Mammary epithelial cell (primary cell): ENCODE measurements at regions of chr4 and their contacts with region 1.

Region 1: DNA sequence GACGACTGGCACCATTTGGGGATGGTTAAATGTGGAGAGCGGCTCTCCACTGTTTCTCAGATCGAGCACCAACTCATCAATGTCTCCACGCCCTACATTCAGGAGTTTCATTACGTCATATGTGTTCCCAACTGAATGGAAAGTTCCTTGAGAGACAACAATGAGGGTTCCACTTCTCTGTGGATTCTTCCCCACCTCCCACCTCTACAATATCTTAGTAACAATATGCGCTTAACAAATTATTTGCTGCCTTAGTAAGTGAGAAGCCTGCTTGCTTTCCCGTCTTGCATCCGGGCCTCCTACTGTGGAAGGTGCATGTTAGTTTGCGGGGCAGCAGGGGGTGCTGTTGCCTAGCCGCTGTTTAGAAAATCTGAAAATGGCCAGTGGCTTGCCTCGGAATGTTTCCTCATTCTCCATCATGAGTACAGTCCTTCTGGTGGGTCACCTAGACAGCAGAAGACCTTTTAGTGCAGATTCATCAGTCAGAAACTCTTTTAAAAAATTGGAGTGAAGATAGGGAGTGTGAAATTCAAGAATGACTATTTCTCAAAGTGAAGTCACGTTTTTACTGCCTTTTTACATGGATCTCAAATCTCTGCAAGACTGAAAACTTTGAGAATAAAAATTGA is 55.7 kb downstream of the PHOX2B start:
- DNase-seq: peak; percentile 40
- H3K4me3 ChIP-seq: no peak overlapping the region
- H3K27ac ChIP-seq: no peak overlapping the region
- H3K4me1 ChIP-seq: no peaks in the 10 kb centered on the region
- H3K27me3 ChIP-seq: no peaks in the 10 kb centered on the region
- CTCF ChIP-seq: peak; percentile 91 to 93

Region 2: GRCh38 chr4:41281038-41281634 is 411.7 kb before region 1 on chr4:
- CTCF ChIA-PET with region 1: no interaction called
- dilution Hi-C with region 1: no loop called
- in situ Hi-C with region 1: no loop called
- intact Hi-C with region 1: loop called (anchors 1 kb)
- DNase-seq: peak; percentile 64
- H3K4me3 ChIP-seq: no peak overlapping the region
- H3K27ac ChIP-seq: no peak overlapping the region
- H3K4me1 ChIP-seq: no peaks in the 10 kb centered on the region
- H3K27me3 ChIP-seq: no peaks in the 10 kb centered on the region
- CTCF ChIP-seq: peak; percentile 87

Region 3: GRCh38 chr4:41784191-41784979 is 91.6 kb after region 1 on chr4:
- CTCF ChIA-PET with region 1: no interaction called
- dilution Hi-C with region 1: no loop called
- in situ Hi-C with region 1: no loop called
- intact Hi-C with region 1: no loop called
- DNase-seq: no peak
- H3K4me3 ChIP-seq: no peak overlapping the region
- H3K27ac ChIP-seq: no peak overlapping the region
- H3K4me1 ChIP-seq: no peaks in the 10 kb centered on the region
- H3K27me3 ChIP-seq: peaks cover 6% of the 10 kb centered on the region
- CTCF ChIP-seq: no peak

Region 4: GRCh38 chr4:41814565-41814964 is 121.7 kb after region 1 on chr4:
- CTCF ChIA-PET with region 1: no interaction called
- dilution Hi-C with region 1: no loop called
- in situ Hi-C with region 1: no loop called
- intact Hi-C with region 1: loop called (anchors 2 kb)
- DNase-seq: peak; percentile 1
- H3K4me3 ChIP-seq: no peak overlapping the region
- H3K27ac ChIP-seq: no peak overlapping the region
- H3K4me1 ChIP-seq: no peaks in the 10 kb centered on the region
- H3K27me3 ChIP-seq: peaks cover 7% of the 10 kb centered on the region
- CTCF ChIP-seq: peak in 1 of 2 donors; percentile 38

Region 5: GRCh38 chr4:41887821-41888686 is 195.2 kb after region 1 on chr4:
- CTCF ChIA-PET with region 1: no interaction called
- dilution Hi-C with region 1: no loop called
- in situ Hi-C with region 1: loop called (anchors 5 kb)
- intact Hi-C with region 1: loop called (anchors 1 kb)
- DNase-seq: no peak
- H3K4me3 ChIP-seq: no peak overlapping the region
- H3K27ac ChIP-seq: no peak overlapping the region
- H3K4me1 ChIP-seq: no peaks in the 10 kb centered on the region
- H3K27me3 ChIP-seq: peaks cover 9% of the 10 kb centered on the region
- CTCF ChIP-seq: peak; percentile 86 to 92

Region 6: GRCh38 chr4:42282081-42282901 is 589.5 kb after region 1 on chr4:
- CTCF ChIA-PET with region 1: no interaction called
- dilution Hi-C with region 1: no loop called
- in situ Hi-C with region 1: no loop called
- intact Hi-C with region 1: loop called (anchors 1 kb)
- DNase-seq: peak; percentile 37
- H3K4me3 ChIP-seq: no peak overlapping the region
- H3K27ac ChIP-seq: no peak overlapping the region
- H3K4me1 ChIP-seq: peaks cover 6% of the 10 kb centered on the region
- H3K27me3 ChIP-seq: no peaks in the 10 kb centered on the region
- CTCF ChIP-seq: peak; percentile 65 to 72